Ascending aorta (tissue), 2 donors: ENCODE measurements at regions of chr4 and their contacts with region 1.

Region 1: DNA sequence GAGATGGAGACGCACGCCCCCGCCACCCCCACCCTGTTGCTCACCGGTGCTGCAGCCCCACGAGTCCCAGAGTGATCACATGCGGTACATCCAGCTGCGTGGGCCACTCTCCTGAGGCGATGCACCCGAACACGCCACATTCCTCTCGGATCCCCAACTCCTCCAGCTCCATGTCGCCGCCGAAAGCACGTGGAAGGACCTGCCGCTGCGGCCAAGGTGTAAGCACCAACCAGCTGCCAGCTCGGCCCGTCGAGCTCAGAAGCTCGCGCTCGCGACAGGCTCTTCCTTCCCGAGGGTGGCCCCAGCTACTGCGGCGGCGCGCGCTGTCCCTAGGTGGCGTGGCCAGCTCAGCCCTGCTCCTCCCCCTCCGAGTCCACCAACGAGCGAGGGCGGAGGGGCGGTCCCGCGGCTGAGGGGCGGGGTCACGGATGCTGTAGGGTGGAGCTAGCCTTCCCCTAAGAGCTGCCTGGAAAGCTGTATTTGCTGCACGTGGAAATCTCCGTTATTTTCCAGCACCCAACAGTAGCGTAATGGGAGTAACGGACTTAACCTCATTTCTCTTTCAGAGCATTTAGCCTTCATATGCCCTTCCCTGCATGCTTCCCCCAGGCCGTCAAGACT is at the start of gene PPAT:
- DNase-seq: peak; percentile 92 to 98
- H3K4me3 ChIP-seq: peak within 1 kb of the TSS; percentile 70 to 86
- H3K27ac ChIP-seq: peak within 1 kb of the TSS; percentile 84 to 88
- H3K4me1 ChIP-seq: peaks cover 0 to 7% of the 10 kb centered on the region in 2 donors
- H3K27me3 ChIP-seq: no peaks in the 10 kb centered on the region
- CTCF ChIP-seq: peak in 1 of 3 experiments; percentile 35
- total RNA-seq, gene PPAT: 3.6 TPM

Region 2: GRCh38 chr4:56410235-56411062 is 25.0 kb before region 1 on chr4:
- intact Hi-C with region 1: loop called (anchors 1 kb)
- DNase-seq: peak in 1 of 2 donors; percentile 80
- H3K4me3 ChIP-seq: peak overlapping the region; percentile 35 to 55
- H3K27ac ChIP-seq: peak overlapping the region; percentile 34 to 36
- H3K4me1 ChIP-seq: peaks cover 0 to 2% of the 10 kb centered on the region in 2 donors
- H3K27me3 ChIP-seq: no peaks in the 10 kb centered on the region
- CTCF ChIP-seq: no peak

Region 3: DNA sequence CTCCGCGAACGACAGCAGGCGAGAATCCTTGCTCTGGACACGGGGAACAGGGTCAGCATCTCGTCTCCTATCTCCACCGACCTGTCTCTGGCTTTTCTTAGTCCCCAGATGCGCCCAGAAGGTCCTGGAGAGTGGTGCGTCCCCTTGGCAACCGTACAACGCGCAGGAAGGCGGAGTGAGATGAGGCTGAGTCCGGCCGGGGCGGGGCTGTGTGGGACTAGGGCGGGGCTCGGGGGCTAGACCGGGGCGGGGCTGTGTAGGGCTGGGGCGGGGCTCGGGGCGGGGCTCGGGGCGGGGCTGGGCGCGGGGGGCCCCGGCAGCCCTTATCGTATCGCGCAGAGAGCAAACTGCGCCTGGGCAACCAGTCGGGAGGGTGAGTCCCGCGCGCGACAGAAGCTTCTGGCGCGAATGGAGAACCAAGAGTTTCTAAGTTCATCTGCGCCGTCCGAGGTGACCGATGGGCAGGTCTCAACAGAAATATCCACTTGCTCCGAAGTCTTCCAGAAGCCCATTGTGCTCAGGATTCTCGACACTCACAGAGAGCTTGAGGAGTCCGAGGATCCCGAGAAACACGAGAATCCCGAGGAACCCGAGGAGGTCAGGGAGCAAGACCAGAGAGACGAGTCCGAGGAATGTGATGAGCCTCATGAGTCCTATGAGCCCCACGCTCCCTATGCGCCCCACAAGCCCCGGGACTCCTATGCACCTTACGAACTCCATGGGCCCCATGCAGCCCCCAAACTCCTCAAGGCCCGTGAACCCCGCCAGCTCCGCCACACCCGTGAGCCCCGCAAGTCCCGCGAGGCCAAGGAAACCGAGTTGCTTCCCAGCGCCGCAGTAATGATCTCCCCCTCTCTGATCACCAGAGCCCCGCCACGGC is 95.1 kb after region 1 on chr4:
- intact Hi-C with region 1: loop called (anchors 1 kb)
- DNase-seq: peak; percentile 48 to 93
- H3K4me3 ChIP-seq: peak overlapping the region; percentile 55 to 63
- H3K27ac ChIP-seq: no peak overlapping the region
- H3K4me1 ChIP-seq: peaks cover 0 to 7% of the 10 kb centered on the region in 2 donors
- H3K27me3 ChIP-seq: no peaks in the 10 kb centered on the region
- CTCF ChIP-seq: no peak

Region 4: GRCh38 chr4:56799824-56800756 is 364.7 kb after region 1 on chr4:
- intact Hi-C with region 1: loop called (anchors 5 kb)
- DNase-seq: peak; percentile 37 to 89
- H3K4me3 ChIP-seq: peak overlapping the region; percentile 69 to 81
- H3K27ac ChIP-seq: peak overlapping the region; percentile 69 to 74
- H3K4me1 ChIP-seq: peaks cover 0 to 3% of the 10 kb centered on the region in 2 donors
- H3K27me3 ChIP-seq: no peaks in the 10 kb centered on the region
- CTCF ChIP-seq: peak; percentile 81 to 88 (median 83)